OCI-LY7 (cell line): ENCODE measurements at regions of chr7 and their contacts with region 1.

Region 1: DNA sequence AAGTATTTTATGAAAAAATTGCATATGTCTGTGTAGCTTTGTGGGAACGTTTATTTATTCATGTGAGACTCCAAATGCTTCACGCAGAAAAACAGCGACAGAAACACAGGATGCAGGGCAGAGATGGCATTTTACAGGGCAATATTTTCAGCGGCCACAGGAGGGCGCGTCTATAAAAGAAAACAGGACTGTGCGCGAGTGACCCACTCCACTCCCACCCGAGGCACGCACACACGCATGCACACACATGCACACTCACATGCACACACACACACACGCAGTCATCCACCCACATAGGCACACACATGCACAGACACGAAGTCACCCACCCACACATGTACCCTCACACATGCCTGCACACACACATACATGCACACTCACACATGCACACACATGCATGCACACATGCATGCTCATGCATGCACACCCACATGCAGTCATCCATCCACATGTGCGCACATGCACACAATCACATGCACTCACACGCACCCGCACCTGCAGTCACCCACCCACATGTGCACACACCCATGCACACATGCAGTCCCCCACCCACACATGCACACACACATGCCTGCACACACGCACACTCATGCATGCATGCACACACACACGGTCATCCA is 96.3 kb downstream of the DNAJB6 start:
- DNase-seq: peak; percentile 38
- H3K4me3 ChIP-seq: no peak overlapping the region
- H3K27ac ChIP-seq: no peak overlapping the region
- H3K4me1 ChIP-seq: no peaks in the 10 kb centered on the region
- CTCF ChIP-seq: peak; percentile 85

Region 2: DNA sequence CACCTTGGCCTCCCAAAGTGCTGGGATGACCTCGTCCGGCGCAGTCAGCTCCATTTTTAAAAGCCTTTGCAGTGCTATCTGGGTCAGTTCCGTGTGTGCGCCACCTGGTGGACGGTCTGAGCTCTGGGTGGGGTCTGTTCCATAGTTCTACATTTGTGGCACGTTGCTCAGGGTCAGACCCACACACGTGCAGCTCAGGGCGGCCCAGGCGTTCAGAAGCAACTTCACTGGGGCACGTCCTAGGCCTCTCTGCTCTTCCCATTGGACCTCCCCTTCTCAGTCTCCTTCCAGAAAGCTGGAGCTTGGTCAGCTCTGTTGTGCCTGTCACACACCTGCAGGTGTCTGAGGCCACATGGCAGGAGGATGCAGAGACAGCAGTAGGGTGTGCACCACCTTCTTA is 41.6 kb after region 1 on chr7:
- CTCF ChIA-PET with region 1: no interaction called
- POLR2A ChIA-PET with region 1: interaction called, 5 read pairs
- intact Hi-C with region 1: loop called (anchors 1 kb)
- DNase-seq: peak; percentile 45
- H3K4me3 ChIP-seq: no peak overlapping the region
- H3K27ac ChIP-seq: no peak overlapping the region
- H3K4me1 ChIP-seq: no peaks in the 10 kb centered on the region
- CTCF ChIP-seq: peak; percentile 77

Region 3: DNA sequence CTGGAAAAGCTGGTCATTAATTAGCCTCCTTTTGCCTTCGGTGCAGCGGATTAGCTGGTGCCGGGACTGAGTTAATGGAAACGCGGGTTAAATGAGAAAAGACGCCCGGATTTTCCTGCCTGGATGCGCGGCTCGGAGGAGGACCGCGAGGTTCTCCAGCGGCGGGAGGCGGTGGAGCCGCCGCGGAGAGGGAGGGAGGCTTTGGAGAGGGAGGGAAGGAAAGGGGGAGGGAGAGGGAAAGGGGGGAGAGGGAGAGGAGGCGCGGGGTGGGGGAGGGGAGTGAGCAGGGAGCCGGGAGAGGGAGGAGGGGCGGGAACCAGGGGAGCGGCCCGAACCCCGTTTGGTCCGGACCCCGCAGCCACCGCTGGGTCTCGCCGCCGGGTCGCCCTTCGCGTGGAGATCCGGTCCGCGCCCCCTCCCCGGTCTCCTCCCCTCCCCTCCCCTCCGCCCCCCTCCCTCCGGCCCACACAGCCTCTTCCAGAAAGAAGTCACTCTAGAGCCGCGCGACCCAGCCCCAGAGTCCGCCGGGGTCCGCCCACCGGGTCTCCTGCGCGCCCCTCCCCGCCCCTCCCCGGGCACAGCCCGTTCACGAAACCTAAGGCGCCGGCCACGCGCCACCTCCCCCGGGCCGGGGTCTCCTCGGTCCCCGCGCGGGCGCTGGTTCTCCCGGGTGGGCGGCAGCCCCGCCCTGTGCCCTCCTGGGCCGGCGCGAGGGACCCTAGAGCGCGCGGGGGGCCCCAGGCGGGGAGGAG is 251.3 kb after region 1 on chr7:
- CTCF ChIA-PET with region 1: no interaction called
- POLR2A ChIA-PET with region 1: no interaction called
- intact Hi-C with region 1: loop called (anchors 10 kb)
- DNase-seq: no peak
- H3K4me3 ChIP-seq: no peak overlapping the region
- H3K27ac ChIP-seq: no peak overlapping the region
- H3K4me1 ChIP-seq: no peaks in the 10 kb centered on the region
- CTCF ChIP-seq: no peak

Region 4: DNA sequence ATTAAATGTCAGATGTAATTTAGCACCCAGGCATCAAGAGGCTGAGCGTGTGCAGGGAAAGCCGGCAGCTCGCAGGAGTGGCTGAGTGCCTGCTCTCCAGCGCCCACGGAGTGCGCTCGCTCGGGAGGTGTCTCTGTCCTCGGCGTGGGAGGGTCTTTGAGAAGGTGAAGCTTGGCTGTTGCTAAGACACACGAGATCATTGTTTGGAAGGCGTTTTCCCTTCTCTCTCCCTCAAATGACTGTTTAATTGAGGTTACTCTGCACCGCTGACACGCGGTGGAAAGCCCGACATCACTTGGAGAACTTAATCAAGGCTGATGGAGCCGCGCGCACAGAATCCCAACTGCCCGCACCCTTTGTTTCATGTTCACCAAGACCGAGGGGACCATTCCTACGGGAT is 318.3 kb after region 1 on chr7:
- CTCF ChIA-PET with region 1: no interaction called
- POLR2A ChIA-PET with region 1: no interaction called
- intact Hi-C with region 1: no loop called
- DNase-seq: no peak
- H3K4me3 ChIP-seq: no peak overlapping the region
- H3K27ac ChIP-seq: no peak overlapping the region
- H3K4me1 ChIP-seq: no peaks in the 10 kb centered on the region
- CTCF ChIP-seq: no peak

Region 5: GRCh38 chr7:157875230-157876179 is 442.4 kb after region 1 on chr7:
- CTCF ChIA-PET with region 1: no interaction called
- POLR2A ChIA-PET with region 1: no interaction called
- intact Hi-C with region 1: loop called (anchors 1 kb)
- DNase-seq: peak; percentile 11
- H3K4me3 ChIP-seq: no peak overlapping the region
- H3K27ac ChIP-seq: no peak overlapping the region
- H3K4me1 ChIP-seq: no peaks in the 10 kb centered on the region
- CTCF ChIP-seq: peak; percentile 77

Region 6: DNA sequence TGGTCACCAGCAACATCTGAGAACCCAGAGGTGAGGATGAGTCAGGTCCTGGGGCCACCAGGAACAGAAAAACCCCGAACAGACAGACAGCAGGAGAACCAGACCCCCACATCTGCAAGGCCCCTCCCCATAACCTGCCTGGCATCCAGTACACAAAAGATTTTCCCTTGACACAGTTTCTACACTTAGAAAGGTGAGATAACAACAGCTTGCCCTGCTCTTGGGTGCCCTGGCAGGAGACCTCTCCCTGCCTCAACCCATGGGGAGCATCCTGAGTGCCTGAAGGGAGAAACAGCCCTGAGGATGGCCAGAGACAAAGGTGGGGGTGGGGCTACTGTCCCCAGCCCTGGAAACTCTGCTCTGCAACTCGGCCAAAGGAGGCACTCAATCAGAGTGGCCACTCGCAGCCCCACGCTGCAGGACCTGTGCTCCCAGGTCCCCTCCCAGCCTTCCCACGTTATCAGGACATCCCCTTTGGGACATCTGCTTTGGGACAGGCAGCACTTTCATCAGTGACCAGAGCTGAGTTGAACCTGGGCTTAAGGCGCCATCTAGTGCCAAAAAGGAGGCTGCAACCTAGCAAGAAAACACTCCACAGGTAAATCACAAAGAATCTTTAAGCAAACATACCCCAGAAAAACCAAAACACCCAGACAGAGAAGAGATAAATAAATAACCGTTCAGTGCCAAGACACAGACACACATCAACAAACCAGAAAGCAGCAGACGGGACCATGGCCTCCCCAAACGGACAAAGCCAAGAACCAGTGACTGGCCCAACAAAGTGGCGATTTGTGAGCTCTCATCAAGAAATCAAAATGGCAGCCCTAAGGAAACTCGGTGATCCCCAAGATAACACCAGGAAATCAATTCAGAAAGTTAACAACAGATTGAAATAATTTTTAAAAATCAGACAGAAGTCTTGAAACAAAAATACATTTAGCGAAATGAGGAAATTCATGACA is 920.8 kb after region 1 on chr7:
- CTCF ChIA-PET with region 1: no interaction called
- POLR2A ChIA-PET with region 1: no interaction called
- intact Hi-C with region 1: loop called (anchors 2 kb)
- DNase-seq: peak; percentile 30
- H3K4me3 ChIP-seq: no peak overlapping the region
- H3K27ac ChIP-seq: no peak overlapping the region
- H3K4me1 ChIP-seq: no peaks in the 10 kb centered on the region
- CTCF ChIP-seq: peak; percentile 86